Vagina (tissue), 2 donors: ENCODE measurements at regions of chr3 and their contacts with region 1.

Region 1: DNA sequence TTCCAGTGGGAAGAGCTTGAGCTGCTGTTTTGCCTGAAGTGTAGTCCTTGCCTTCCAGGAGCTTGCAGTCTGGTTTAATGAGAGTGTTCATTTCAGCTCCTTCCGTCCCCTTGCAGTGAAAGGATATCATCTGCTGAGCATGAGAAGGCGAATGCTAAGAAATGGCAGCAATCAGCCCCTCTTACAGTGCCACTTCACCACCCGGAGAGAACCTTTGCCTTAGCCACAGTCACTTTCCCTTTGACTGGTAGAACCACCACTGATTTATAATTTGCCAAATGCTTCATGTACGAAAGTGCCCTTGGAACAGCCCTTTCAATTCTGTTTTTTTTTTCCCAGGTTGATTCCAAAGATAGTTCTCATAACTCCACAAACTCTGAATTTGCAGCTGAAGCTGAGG is 11.5 kb downstream of the TATDN2 start:
- DNase-seq: no peak
- H3K4me3 ChIP-seq: no peak overlapping the region
- H3K27ac ChIP-seq: no peak overlapping the region
- H3K4me1 ChIP-seq: peaks cover 15% of the 10 kb centered on the region
- H3K27me3 ChIP-seq: no peaks in the 10 kb centered on the region
- CTCF ChIP-seq: no peak
- POLR2A ChIP-seq: no peak

Region 2: GRCh38 chr3:9715764-9716437 is 543.9 kb before region 1 on chr3:
- intact Hi-C with region 1: no loop called
- DNase-seq: peak in 1 of 2 donors; percentile 95
- H3K4me3 ChIP-seq: no peak overlapping the region
- H3K27ac ChIP-seq: peak overlapping the region; percentile 68
- H3K4me1 ChIP-seq: peaks cover 15% of the 10 kb centered on the region
- H3K27me3 ChIP-seq: no peaks in the 10 kb centered on the region
- CTCF ChIP-seq: peak; percentile 72 to 86 (median 76)
- POLR2A ChIP-seq: no peak

Region 3: GRCh38 chr3:10309736-10310135 is 49.9 kb after region 1 on chr3:
- intact Hi-C with region 1: loop called (anchors 5 kb)
- DNase-seq: no peak
- H3K4me3 ChIP-seq: no peak overlapping the region
- H3K27ac ChIP-seq: no peak overlapping the region
- H3K4me1 ChIP-seq: no peaks in the 10 kb centered on the region
- H3K27me3 ChIP-seq: no peaks in the 10 kb centered on the region
- CTCF ChIP-seq: no peak
- POLR2A ChIP-seq: no peak